Upper lobe of right lung (tissue), 1 donor: ENCODE measurements at regions of chr1 and their contacts with region 1.

Region 1: GRCh38 chr1:26787706-26788514 is at the start of gene PIGV:
- DNase-seq: peak; percentile 95
- ATAC-seq: peak; percentile 90
- H3K4me3 ChIP-seq: peak within 1 kb of the TSS; percentile 92
- H3K27ac ChIP-seq: peak within 1 kb of the TSS; percentile 100
- H3K4me1 ChIP-seq: peaks cover 41% of the 10 kb centered on the region
- H3K27me3 ChIP-seq: no peaks in the 10 kb centered on the region
- CTCF ChIP-seq: no peak
- total RNA-seq, gene PIGV: 16.7 TPM

Region 2: DNA sequence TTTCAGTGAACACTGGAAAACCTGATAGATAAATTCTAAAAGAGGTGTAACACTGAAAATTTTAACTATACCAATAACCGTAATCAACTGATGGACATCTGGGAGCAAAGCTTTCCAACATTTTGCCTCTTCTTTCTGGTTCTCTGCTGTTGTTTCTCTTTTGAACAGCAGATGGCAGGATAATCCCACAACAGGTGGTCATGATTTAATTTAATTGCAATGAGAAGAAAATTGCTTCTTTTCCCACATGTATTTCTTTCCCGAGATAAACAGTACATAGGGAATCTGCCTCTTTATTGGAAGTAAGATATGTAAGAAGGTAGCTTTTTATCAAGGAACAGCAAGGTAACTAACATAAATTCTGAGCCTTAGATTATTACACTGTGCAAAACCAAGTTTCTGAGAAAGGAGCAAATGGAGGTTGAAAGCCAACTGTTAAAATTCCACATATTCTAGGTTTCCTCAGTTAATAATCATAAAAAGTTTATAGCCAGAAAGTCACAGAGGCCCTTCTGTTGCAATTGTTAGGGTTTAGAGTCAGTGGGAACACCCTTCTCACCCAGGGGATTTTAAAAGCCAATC is 185.4 kb before region 1 on chr1:
- intact Hi-C with region 1: loop called (anchors 5 kb)
- DNase-seq: no peak
- ATAC-seq: peak; percentile 85
- H3K4me3 ChIP-seq: no peak overlapping the region
- H3K27ac ChIP-seq: no peak overlapping the region
- H3K4me1 ChIP-seq: no peaks in the 10 kb centered on the region
- H3K27me3 ChIP-seq: no peaks in the 10 kb centered on the region
- CTCF ChIP-seq: peak; percentile 88

Region 3: GRCh38 chr1:26695356-26696118 is 92.4 kb before region 1 on chr1 and contains the start of gene ARID1A:
- intact Hi-C with region 1: loop called (anchors 10 kb)
- DNase-seq: peak; percentile 99
- ATAC-seq: peak; percentile 86
- H3K4me3 ChIP-seq: peak within 1 kb of the TSS; percentile 83
- H3K27ac ChIP-seq: peak within 1 kb of the TSS; percentile 91
- H3K4me1 ChIP-seq: peaks cover 49% of the 10 kb centered on the region
- H3K27me3 ChIP-seq: no peaks in the 10 kb centered on the region
- CTCF ChIP-seq: peak; percentile 5
- total RNA-seq, gene ARID1A: 64.3 TPM

Region 4: DNA sequence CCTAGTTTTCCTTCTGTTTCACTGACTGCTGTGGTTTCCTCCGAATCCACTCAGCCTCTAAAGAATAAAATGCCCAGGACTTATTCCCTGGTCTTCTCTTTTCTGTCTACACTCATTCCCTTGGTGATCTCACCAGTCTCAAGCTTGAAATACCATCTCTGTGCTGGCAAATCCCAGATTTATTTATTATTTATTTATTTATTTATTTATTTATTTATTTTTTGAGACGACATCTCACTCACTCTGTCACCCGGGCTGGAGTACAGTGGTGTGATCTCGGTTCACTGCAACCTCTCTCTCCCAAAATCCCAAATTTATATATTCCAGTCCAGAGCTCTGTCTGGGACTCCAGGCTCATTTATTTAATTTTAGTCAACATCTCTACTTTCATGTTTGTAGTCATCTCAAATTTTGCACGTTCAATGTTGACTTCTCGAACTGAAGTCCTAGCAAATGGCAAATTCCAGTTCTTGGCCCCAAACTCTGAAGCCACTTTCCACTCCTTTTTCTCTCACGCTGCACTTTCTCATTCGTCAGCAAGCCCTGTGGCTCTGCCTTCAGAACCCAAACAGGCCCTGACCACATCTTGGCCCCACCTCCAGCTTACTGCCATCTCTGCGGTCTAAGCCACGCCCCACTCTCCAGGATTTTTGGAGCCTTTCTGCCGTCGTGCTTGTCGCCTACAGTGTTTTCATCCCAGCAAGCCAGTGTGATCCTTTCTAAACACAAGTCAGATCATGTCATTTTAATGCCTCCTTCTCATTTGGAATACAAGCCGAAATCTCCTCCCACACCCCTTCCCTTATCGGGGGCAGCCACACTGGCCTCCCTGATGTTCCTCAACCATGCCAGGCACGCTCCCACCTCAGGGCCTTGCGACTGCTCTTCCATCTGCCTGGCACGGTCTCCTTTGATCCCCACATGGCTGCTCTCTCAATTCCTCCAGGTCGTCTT is 239.0 kb after region 1 on chr1:
- intact Hi-C with region 1: no loop called
- DNase-seq: peak; percentile 82
- ATAC-seq: peak; percentile 69
- H3K4me3 ChIP-seq: no peak overlapping the region
- H3K27ac ChIP-seq: peak overlapping the region; percentile 32
- H3K4me1 ChIP-seq: peaks cover 25% of the 10 kb centered on the region
- H3K27me3 ChIP-seq: no peaks in the 10 kb centered on the region
- CTCF ChIP-seq: no peak